AG04449 (cell line): ENCODE measurements at regions of chr7 and their contacts with region 1.

Region 1: GRCh38 chr7:131513245-131514061 is 43.0 kb downstream of the PODXL start:
- DNase-seq: no peak
- H3K4me3 ChIP-seq: no peak overlapping the region
- CTCF ChIP-seq: peak; percentile 99

Region 2: DNA sequence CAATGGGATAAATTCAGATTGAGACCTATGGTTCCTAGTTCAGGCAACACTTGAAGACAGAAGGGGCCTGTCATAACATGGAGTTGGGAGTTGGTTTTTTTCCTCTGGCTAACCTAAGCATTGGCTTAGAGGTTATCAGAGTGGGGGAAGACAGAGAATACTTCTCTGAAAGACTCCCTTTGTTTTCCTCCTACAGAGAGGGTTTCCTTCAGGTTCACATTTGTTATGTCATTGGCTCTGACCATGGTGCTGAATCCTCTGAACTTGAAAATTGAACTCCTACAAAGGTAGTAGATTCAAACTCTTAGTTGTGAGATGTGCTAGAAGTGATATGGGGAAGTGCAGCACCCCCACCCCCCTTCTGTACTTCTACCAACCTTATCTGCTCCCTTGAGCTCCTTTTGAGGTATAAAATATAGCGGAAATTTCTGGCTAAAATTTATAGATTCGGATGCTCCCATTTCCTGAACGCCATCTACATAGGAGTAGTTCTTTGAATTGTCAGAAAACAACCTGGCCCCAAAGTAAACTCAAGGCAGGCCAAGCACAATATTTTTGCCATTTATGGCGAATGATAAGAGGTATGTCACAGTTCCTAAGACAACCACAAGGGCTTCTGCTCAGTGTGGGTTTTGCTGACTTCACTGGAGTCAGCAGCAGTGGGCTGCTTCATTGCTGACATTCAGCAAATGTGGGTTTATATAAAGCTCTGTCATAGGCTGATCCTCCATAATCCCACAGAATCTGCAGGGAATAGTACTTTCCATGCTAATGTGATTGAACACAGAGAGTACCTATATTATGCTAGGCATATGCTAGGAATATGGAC is 647.8 kb before region 1 on chr7:
- CTCF ChIA-PET with region 1: no interaction called
- POLR2A ChIA-PET with region 1: no interaction called
- DNase-seq: no peak
- H3K4me3 ChIP-seq: no peak overlapping the region
- CTCF ChIP-seq: no peak

Region 3: DNA sequence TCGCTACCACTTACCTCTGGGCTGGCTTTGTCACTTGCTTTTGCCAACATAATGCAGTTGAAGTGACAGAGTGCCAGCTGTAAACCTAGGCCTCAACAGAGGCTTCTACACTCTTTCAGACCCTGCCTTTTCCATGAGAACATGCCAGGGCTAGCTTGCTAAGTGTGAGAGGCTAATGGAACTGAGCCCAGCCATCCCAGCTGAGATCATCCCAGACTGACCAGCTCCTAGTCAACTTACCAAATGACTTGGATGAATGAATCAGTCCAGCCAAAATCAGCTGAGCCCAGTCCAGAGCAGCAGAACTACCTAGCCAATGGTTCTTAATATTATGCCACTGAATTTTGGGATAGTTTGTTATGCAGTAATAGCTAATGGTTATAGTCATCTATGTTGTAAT is 220.4 kb before region 1 on chr7:
- CTCF ChIA-PET with region 1: no interaction called
- POLR2A ChIA-PET with region 1: no interaction called
- DNase-seq: peak; percentile 21
- H3K4me3 ChIP-seq: no peak overlapping the region
- CTCF ChIP-seq: no peak

Region 4: GRCh38 chr7:131488361-131488760 is 25.1 kb before region 1 on chr7:
- CTCF ChIA-PET with region 1: interaction called, 114 read pairs
- POLR2A ChIA-PET with region 1: no interaction called
- DNase-seq: no peak
- H3K4me3 ChIP-seq: no peak overlapping the region
- CTCF ChIP-seq: no peak

Region 5: GRCh38 chr7:131538071-131538790 is 24.8 kb after region 1 on chr7:
- CTCF ChIA-PET with region 1: interaction called, 53 read pairs
- POLR2A ChIA-PET with region 1: no interaction called
- DNase-seq: no peak
- H3K4me3 ChIP-seq: no peak overlapping the region
- CTCF ChIP-seq: no peak

Region 6: GRCh38 chr7:131636092-131636491 is 122.6 kb after region 1 on chr7:
- CTCF ChIA-PET with region 1: interaction called, 12 read pairs
- POLR2A ChIA-PET with region 1: no interaction called
- DNase-seq: no peak
- H3K4me3 ChIP-seq: no peak overlapping the region
- CTCF ChIP-seq: no peak

Region 7: GRCh38 chr7:131654668-131655326 is 141.3 kb after region 1 on chr7:
- CTCF ChIA-PET with region 1: interaction called, 334 read pairs
- POLR2A ChIA-PET with region 1: no interaction called
- DNase-seq: peak; percentile 1
- H3K4me3 ChIP-seq: no peak overlapping the region
- CTCF ChIP-seq: peak; percentile 99